Activated CD8-positive, alpha-beta memory T cell treated with anti-CD3 and anti-CD28 coated beads, Interleukin-2, amount 10 ng/mL, durations not matched to agents 7 days and 5 days (primary cell): ENCODE measurements at regions of chr3 and their contacts with region 1.

Region 1: DNA sequence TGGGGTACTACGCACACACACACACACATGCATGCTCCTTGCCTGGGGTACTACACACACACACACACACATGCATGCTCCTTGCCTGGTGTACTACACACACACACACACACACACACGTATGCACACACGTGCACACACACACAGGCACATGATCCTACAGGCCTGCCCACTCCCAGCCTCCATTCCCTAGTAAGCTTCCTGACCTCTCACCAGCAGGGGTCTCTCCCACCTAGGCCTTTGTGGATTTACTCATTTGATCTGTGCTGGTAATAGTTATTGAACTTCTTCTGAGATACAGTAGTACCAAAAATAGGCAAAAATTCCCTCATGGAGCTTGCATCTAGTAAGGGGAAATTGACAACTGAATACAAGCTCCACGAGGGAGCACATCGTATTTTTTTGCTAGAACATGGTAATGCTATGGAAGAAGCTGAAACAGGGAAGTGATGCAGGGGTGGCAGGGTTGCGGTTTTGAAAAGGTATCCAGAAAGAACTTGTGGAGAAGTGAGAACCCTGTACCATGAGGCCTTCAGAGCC is 19.1 kb downstream of the TTC21A start:
- DNase-seq: no peak
- ATAC-seq: no peak
- H3K4me3 Mint-ChIP-seq: no peak overlapping the region
- H3K27ac Mint-ChIP-seq: no peak overlapping the region
- H3K4me1 Mint-ChIP-seq: peaks cover 18% of the 10 kb centered on the region
- H3K27me3 Mint-ChIP-seq: peaks cover 8% of the 10 kb centered on the region

Region 2: GRCh38 chr3:39107388-39108199 is 19.0 kb before region 1 on chr3 and contains the starts of genes GORASP1 and TTC21A:
- CTCF ChIA-PET with region 1: interaction called, 21 read pairs
- DNase-seq: peak; percentile 77
- ATAC-seq: peak; percentile 69
- H3K4me3 Mint-ChIP-seq: peak within 1 kb of the TSS; percentile 92
- H3K27ac Mint-ChIP-seq: peak within 1 kb of the TSS; percentile 85
- H3K4me1 Mint-ChIP-seq: peaks cover 41% of the 10 kb centered on the region
- H3K27me3 Mint-ChIP-seq: peaks cover 10% of the 10 kb centered on the region
- total RNA-seq, gene GORASP1: 28.8 to 32.0 TPM
- total RNA-seq, gene TTC21A: 1.9 to 8.3 TPM

Region 3: DNA sequence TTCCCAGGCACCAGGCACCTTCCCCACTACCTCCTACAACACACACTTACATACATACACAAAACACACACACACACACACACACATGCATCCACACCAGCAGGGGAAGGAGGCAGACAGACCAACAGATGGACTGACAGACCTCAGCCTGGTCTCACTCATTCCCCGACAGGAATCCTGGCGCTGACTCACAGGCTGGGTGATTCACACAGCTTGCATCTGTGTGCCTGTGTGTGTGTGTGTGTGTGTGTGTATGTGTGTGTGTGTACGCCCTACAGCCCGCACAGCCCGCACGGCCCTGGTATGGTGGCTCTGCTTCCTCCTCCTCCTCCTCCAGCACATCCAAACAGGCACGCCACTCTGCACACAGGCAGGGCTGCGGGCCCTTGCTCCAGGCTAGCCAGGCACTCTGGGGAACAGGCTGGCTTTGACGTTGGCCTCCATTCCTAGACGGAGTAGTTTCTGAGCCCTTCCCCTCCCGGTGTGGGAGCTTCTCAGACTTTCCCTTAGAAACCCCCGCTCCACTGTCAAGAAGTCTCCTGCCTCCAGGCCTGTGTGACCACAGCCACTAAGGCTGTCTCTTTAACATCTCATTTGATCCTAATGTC is 20.5 kb after region 1 on chr3:
- CTCF ChIA-PET with region 1: interaction called, 11 read pairs
- DNase-seq: peak; percentile 87
- ATAC-seq: peak; percentile 45
- H3K4me3 Mint-ChIP-seq: peak overlapping the region; percentile 71
- H3K27ac Mint-ChIP-seq: peak overlapping the region; percentile 95
- H3K4me1 Mint-ChIP-seq: peaks cover 67% of the 10 kb centered on the region
- H3K27me3 Mint-ChIP-seq: no peaks in the 10 kb centered on the region